CD4-positive, alpha-beta memory T cell (primary cell): ENCODE measurements at regions of chr11 and their contacts with region 1.

Region 1: DNA sequence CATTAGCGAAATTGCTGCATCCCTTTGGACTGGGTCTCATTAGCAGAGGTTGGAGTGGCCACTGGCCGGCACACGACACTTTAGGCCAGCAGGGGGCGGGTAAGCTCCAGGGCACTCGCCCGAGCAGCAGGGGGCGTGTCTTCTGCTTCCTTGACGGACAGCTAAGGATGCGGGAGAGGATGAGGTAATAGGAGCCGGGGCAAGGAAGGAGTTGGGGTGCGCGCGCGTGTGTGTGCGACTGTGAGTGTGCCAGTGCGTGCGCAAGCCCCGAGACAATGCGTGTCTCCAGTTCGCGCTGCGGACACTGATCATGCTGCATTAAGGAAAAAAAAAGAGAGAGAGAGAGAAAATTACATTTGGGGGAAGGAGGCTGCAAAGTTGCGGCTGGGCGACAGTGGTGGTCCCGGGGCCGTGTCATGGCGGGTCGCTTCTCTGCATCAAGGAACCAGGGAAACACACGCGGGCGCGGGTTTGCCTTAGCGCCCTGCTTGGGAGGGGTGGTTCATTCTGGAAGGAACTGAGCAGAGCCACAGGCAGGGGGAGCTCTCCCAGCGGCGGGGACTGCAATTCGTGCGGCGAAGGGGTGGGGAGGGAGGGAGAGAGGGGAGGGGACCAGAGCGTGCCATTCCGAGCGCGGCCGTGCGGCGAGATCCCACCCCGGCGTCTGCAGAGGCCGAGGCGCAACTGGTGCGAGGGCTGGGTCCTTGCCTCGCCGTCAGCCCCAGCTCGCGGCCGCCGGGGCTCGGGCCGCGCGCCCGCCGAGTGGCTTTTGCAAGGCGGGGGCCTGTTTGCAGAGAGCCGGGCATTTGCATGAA is at the start of gene DTX4:
- DNase-seq: peak; percentile 84 to 91 (median 84)
- H3K4me3 ChIP-seq: peak within 1 kb of the TSS; percentile 63 to 82
- H3K4me3 Mint-ChIP-seq: peak within 1 kb of the TSS; percentile 86 to 98 (median 90)
- H3K27ac ChIP-seq: no peak within 1 kb of the TSS
- H3K27ac Mint-ChIP-seq: peak within 1 kb of the TSS; percentile 13 to 86 (median 71)
- H3K4me1 ChIP-seq: peaks cover 11% of the 10 kb centered on the region
- H3K4me1 Mint-ChIP-seq: peaks cover 7 to 28% (median 9%) of the 10 kb centered on the region in 4 donors
- H3K27me3 ChIP-seq: no peaks in the 10 kb centered on the region
- H3K27me3 Mint-ChIP-seq: peaks cover 0 to 5% of the 10 kb centered on the region in 2 donors
- total RNA-seq, gene DTX4: 2.9 to 3.4 TPM

Region 2: GRCh38 chr11:59142530-59143507 is 28.9 kb before region 1 on chr11 and contains the start of gene FAM111A:
- CTCF ChIA-PET with region 1: interaction called, 9 read pairs
- POLR2A ChIA-PET with region 1: interaction called, 8 read pairs
- intact Hi-C with region 1: loop called (anchors 1 kb)
- DNase-seq: peak; percentile 89 to 94 (median 90)
- H3K4me3 ChIP-seq: peak within 1 kb of the TSS; percentile 86 to 92
- H3K4me3 Mint-ChIP-seq: peak within 1 kb of the TSS; percentile 94 to 98 (median 97)
- H3K27ac ChIP-seq: peak within 1 kb of the TSS; percentile 87
- H3K27ac Mint-ChIP-seq: peak within 1 kb of the TSS; percentile 96 to 99 (median 98)
- H3K4me1 ChIP-seq: peaks cover 46% of the 10 kb centered on the region
- H3K4me1 Mint-ChIP-seq: peaks cover 39 to 60% (median 43%) of the 10 kb centered on the region in 4 donors
- H3K27me3 ChIP-seq: no peaks in the 10 kb centered on the region
- H3K27me3 Mint-ChIP-seq: no peaks in the 10 kb centered on the region
- total RNA-seq, gene FAM111A: 128 to 130 TPM

Region 3: GRCh38 chr11:59186130-59186594 is 14.4 kb after region 1 on chr11:
- CTCF ChIA-PET with region 1: interaction called, 205 read pairs
- POLR2A ChIA-PET with region 1: interaction called, 11 read pairs
- intact Hi-C with region 1: loop called (anchors 1 kb)
- DNase-seq: peak; percentile 37 to 56 (median 43)
- H3K4me3 ChIP-seq: no peak overlapping the region
- H3K4me3 Mint-ChIP-seq: no peak overlapping the region
- H3K27ac ChIP-seq: no peak overlapping the region
- H3K27ac Mint-ChIP-seq: no peak overlapping the region
- H3K4me1 ChIP-seq: no peaks in the 10 kb centered on the region
- H3K4me1 Mint-ChIP-seq: no peaks in the 10 kb centered on the region
- H3K27me3 ChIP-seq: no peaks in the 10 kb centered on the region
- H3K27me3 Mint-ChIP-seq: peaks cover 0 to 2% of the 10 kb centered on the region in 2 donors

Region 4: GRCh38 chr11:59197991-59198390 is 26.3 kb after region 1 on chr11:
- CTCF ChIA-PET with region 1: interaction called, 26 read pairs
- POLR2A ChIA-PET with region 1: no interaction called
- intact Hi-C with region 1: no loop called
- DNase-seq: no peak
- H3K4me3 ChIP-seq: no peak overlapping the region
- H3K4me3 Mint-ChIP-seq: no peak overlapping the region
- H3K27ac ChIP-seq: no peak overlapping the region
- H3K27ac Mint-ChIP-seq: no peak overlapping the region
- H3K4me1 ChIP-seq: peaks cover 7% of the 10 kb centered on the region
- H3K4me1 Mint-ChIP-seq: peaks cover 5 to 20% (median 13%) of the 10 kb centered on the region in 4 donors
- H3K27me3 ChIP-seq: no peaks in the 10 kb centered on the region
- H3K27me3 Mint-ChIP-seq: no peaks in the 10 kb centered on the region

Region 5: DNA sequence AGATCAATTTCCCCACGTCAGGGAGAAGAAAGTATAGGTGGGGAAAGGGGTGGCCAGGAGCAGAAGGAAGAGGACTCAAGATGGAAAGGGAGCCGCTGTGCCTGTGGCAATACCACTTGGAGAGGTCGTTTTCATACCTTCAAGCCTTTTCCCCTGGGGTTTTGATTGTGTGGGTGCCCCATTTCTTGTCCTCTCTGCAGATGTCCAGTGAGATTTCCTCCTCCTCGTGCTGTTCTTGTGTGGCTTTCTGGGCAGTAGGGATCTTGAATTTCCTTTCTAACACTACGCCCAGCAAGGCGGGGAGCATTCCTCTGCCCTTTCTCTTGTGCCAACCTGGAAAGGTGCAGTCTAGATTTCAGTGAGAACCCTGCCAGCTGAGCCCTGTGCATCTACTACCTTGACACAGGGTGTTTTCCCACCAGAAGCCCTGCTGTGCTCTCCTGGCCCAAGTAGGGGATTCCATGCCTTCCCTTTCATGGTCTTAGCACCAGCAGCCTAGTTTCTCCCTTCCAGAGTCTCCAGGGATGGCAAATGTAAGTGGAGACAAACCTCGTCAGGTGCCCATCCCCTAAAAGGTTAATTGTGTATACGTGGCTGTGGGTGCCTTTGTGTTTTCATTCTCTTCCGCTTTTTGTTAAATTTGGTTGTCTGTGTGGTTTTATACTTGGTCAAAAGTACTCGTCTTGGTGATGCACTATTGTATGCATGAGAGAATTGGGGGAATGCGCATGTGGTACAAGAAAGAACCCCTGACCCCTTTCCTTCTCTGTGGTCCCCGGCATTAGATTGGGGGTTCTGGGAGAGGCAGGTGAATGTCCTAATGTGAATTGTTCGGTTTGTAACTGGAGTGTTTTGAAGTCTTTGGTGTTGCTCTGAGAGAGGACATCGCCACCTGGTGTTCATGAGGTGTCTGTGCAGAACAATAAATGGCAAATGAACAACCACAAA is 112.4 kb after region 1 on chr11:
- CTCF ChIA-PET with region 1: interaction called, 10 read pairs
- POLR2A ChIA-PET with region 1: no interaction called
- intact Hi-C with region 1: loop called (anchors 1 kb)
- DNase-seq: peak; percentile 55 to 65 (median 64)
- H3K4me3 ChIP-seq: peak overlapping the region in 1 of 2 donors; percentile 23
- H3K4me3 Mint-ChIP-seq: peak overlapping the region; percentile 38 to 85 (median 72)
- H3K27ac ChIP-seq: no peak overlapping the region
- H3K27ac Mint-ChIP-seq: peak overlapping the region in 4 of 7 donors; percentile 6 to 62 (median 34)
- H3K4me1 ChIP-seq: peaks cover 15% of the 10 kb centered on the region
- H3K4me1 Mint-ChIP-seq: peaks cover 10 to 19% (median 15%) of the 10 kb centered on the region in 4 donors
- H3K27me3 ChIP-seq: no peaks in the 10 kb centered on the region
- H3K27me3 Mint-ChIP-seq: peaks cover 3 to 4% of the 10 kb centered on the region in 2 donors

Region 6: GRCh38 chr11:59550368-59550841 is 378.7 kb after region 1 on chr11:
- CTCF ChIA-PET with region 1: no interaction called
- POLR2A ChIA-PET with region 1: no interaction called
- intact Hi-C with region 1: loop called (anchors 10 kb)
- DNase-seq: peak; percentile 86 to 94 (median 87)
- H3K4me3 ChIP-seq: peak overlapping the region; percentile 19 to 61
- H3K4me3 Mint-ChIP-seq: peak overlapping the region; percentile 86 to 96 (median 88)
- H3K27ac ChIP-seq: peak overlapping the region; percentile 51
- H3K27ac Mint-ChIP-seq: peak overlapping the region; percentile 92 to 100 (median 94)
- H3K4me1 ChIP-seq: peaks cover 14% of the 10 kb centered on the region
- H3K4me1 Mint-ChIP-seq: peaks cover 16 to 52% (median 26%) of the 10 kb centered on the region in 4 donors
- H3K27me3 ChIP-seq: no peaks in the 10 kb centered on the region
- H3K27me3 Mint-ChIP-seq: peaks cover 0 to 9% of the 10 kb centered on the region in 2 donors